Right ventricle myocardium superior (tissue), 1 donor: ENCODE measurements at regions of chr7 and their contacts with region 1.

Region 1: DNA sequence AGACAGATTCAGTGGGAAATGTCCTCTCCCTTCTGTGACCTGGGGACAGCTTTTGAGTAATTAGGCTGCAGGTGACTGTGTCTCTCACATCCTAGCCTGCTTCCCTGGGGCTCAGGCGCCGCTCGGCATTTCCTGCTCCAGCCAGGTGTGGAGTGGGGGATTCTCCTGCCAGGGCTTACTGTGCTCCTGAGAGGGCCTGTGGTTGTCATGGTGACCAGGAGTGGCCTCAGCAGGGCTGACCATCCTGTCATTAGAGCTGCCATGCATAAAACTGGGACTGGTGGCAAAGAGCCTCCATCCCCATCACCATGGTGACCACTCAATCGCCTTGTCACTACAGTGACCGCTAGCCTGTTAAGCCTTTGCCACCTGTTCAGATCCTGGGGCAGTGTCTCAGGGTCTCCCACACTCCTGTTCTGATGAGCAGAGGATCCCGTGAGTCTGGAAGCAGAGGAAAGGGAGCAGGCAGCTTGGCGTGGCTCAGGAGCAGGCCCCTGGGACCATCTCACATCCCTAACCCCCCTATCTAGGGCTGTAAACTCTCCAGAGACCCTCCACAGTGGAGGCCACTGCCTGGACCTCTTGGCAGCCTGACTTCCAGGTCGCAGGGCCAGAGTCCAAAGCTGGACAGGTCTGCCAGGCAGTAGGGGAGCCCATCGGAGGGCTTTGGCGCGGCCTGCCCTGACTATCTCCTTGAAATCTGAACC is at the start of gene GCK:
- DNase-seq: no peak
- ATAC-seq: no peak
- total RNA-seq, gene GCK: 1.3 TPM

Region 2: DNA sequence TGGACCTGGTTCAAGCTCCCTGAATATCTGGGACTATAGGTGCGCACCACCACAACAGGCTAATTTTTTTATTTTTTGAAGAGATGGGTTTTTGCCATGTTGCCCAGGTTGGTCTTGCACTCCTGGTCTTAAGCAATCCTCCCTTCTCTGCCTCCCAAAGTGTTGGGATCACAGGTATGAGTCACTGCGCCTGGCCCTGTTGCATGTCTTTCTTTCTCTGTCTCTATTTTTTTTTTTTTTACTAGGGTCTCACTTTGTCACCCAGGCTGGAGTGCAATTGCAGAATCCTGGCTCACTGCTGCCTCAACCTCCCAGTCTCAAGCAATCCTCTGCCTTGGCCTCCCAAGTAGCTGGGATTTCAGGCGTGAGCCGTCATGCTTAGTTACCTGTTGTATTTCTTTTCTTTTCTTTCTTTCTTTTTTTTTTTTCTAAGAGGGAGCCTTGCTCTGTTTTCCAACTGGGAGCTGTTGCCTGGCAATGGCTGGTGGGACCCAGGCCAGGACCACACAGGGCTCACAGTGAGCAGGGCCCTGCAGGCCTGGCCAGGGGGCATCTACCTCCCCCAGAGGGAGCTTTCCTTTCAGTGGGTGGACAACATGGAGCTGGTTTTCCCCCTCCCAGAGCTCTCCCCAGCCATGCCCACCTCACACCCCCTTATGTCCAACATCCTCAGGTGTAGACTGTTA is 54.4 kb before region 1 on chr7:
- intact Hi-C with region 1: loop called (anchors 5 kb)
- DNase-seq: no peak
- ATAC-seq: peak; percentile 37